ENCODE measurements at regions of chr17 and their contacts with region 1.

Region 1: DNA sequence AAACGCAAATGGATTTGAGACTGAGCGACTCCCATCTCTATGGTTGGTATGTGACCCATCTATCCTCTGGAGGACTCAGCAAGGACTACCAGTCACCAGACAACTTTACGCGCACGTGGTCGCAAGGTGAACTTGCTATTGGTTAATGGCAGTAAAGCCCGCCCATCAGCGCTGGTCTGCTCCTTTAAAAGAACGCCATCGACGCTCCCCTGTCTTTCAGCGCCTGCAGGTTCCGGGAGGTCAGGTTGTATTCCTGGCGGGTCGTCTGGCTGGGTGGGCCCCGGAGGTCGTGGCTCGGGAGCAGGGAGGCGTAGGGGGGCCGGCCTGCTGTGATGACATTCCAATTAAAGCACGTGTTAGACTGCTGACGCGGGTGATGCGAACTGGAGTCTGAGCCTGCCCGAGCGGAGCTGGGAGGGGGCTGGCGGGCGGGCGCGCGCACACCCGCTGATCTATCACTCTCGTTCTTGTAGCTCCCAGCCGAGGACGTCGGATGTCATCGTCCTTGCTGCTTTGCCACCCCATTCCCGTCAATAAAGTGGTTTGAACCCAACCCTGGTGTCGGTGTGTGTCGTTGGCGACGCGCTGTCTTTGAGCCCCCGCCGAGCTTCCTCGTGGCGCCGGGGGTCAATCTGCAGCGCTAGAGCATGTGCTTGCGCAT is 15.9 kb upstream of the ERN1 start:
- DNase-seq: peak; percentile 95

Region 2: GRCh38 chr17:64073771-64074703 is 71.8 kb before region 1 on chr17:
- CTCF ChIA-PET with region 1: no interaction called
- POLR2A ChIA-PET with region 1: interaction called, 11 read pairs
- DNase-seq: no peak

Region 3: DNA sequence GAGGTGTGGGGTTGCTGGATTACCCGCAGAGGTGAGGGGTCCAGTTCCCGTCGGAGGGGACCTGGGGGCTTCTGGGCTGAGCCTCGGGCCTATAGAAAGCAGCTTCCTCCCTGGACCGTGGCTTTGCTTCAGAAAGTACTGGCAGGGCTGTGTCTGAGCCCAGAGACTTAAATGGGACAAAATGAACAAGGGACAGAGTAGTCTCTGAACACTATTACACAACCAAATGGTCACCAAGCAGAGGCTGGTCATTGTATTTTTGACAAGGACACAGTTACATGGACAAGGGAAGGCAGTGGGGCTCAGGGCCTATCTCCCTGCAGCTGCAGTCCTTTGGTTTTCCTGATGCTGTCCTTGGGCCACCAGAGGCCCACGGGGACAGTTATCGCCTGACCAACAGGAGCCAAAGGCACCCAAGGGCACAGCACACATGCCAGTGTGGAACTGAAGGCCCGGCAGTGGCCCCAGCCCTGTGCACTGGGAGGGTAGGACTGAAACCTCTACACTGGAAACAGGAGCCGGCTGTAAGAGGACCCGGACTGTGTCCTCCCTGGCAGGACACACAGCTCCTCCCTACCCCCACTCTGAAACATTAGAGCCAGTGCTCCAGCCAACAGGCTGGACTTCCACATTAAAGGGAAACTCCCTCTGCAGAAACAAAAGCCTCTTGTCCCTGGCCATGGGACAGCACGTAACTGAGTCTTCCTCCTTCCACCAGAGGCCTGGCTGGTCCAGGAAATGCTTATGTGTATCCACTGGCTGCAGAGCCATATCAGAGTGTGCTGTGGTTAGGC is 10.1 kb after region 1 on chr17:
- CTCF ChIA-PET with region 1: no interaction called
- POLR2A ChIA-PET with region 1: interaction called, 51 read pairs
- DNase-seq: no peak

Region 4: DNA sequence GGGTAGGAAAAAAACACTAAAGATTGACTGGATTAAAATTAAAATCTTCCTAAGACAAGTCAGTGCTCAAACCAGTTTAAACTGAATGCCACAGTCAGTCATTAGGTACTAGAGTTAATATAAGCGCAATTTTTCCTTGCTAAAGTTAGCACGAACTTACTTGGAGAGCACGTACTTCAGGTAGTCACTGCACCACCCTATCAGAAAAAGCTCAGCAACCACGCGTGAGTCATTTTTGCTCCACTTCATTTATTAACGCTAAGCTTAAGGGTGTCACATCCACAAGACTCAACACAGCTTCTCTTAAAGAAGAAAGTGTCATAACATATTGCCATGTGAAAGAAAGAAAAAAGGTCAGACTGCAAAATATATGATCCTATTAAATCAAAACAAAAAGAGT is 64.1 kb after region 1 on chr17:
- CTCF ChIA-PET with region 1: no interaction called
- POLR2A ChIA-PET with region 1: interaction called, 11 read pairs
- DNase-seq: no peak

Region 5: GRCh38 chr17:64262417-64263260 is 116.8 kb after region 1 on chr17 and contains the start of gene TEX2:
- CTCF ChIA-PET with region 1: no interaction called
- POLR2A ChIA-PET with region 1: interaction called, 34 read pairs
- DNase-seq: peak; percentile 62

Region 6: GRCh38 chr17:64306850-64307463 is 161.1 kb after region 1 on chr17:
- CTCF ChIA-PET with region 1: no interaction called
- POLR2A ChIA-PET with region 1: interaction called, 10 read pairs
- DNase-seq: peak; percentile 70